Activated CD4-positive, alpha-beta memory T cell treated with anti-CD3 and anti-CD28 coated beads, Interleukin-2, amount 10 ng/mL, durations not matched to agents 7 days and 5 days (primary cell): ENCODE measurements at regions of chr5 and their contacts with region 1.

Region 1: DNA sequence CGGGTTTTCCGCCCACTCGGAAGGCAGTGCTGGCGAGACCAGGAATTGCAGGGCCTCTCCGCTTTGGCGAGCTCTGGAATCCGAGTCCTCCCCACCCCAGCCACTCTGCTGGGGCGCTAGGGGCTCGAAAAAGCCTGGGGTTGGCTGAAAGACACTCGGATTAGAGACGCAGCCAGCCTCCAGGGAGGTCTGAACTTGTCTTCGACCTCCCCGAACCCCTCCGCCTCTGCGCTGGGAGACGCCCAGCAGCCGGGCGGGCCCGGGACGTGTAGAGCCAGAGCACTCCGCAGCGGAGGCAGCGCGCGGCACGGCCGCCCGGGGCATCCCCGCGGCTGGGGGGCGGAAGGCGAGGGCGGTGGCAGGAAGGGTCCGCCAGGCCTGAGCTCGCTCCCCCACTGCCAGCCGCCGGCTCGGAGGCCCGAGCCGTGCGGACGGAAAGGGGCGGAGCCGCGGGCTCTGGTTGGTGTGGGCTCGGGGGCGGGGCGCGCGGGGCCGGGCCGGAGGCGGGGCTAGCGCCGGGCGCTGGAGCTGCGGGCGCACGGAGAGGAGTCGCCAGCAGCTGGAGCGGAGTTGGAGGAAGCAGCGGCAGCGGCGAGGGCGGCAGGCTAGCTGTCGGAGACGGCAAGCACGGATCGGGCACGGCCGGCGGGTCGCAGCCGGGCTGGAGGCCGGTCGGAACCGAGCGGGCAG is at the start of gene PIK3R1:
- DNase-seq: peak; percentile 93
- H3K4me3 Mint-ChIP-seq: peak within 1 kb of the TSS; percentile 85
- H3K27ac Mint-ChIP-seq: peak within 1 kb of the TSS; percentile 88
- H3K4me1 Mint-ChIP-seq: peaks cover 33% of the 10 kb centered on the region
- H3K27me3 Mint-ChIP-seq: no peaks in the 10 kb centered on the region
- total RNA-seq, gene PIK3R1: 83.1 to 86.4 TPM

Region 2: DNA sequence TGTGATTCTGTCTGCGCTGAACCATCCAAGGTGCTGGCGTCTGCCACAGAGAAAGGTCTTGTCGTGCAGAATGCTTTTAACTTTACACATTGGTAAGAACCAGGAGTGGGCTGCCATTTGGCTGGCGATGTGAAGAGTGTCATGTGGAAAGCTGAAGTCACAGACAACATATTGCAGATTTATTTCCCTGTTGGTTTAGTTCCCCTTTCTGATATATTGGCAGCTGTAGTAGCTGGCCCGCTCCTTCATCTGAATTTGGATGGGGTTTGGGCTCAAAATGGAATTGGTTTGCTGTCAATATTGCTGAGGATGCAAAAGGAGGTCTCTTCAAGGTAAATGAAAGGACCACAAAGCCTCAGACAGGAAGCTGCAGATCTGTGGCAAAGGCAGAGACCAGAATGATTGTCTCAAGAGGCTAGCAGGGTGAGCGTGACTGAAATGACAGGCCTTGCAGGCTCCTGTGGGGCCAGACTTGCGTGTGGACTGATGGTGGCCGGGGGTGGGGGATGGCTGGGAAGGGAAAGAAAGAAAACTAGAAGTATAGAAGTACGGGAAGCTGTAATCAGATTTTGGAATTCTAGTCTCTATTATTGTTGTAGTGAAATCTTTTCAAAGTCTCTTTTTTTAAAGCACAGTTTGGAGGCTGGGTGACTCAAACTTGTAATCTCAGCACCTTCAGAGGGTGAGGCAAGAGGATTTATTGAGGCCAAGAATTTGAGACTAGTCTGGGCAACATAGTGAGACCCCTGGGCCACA is 993.7 kb before region 1 on chr5:
- CTCF ChIA-PET with region 1: no interaction called
- POLR2A ChIA-PET with region 1: interaction called, 14 read pairs
- DNase-seq: peak; percentile 82
- H3K4me3 Mint-ChIP-seq: peak overlapping the region; percentile 46
- H3K27ac Mint-ChIP-seq: peak overlapping the region; percentile 95
- H3K4me1 Mint-ChIP-seq: peaks cover 65% of the 10 kb centered on the region
- H3K27me3 Mint-ChIP-seq: no peaks in the 10 kb centered on the region

Region 3: GRCh38 chr5:67935908-67936566 is 279.3 kb before region 1 on chr5:
- CTCF ChIA-PET with region 1: no interaction called
- POLR2A ChIA-PET with region 1: no interaction called
- DNase-seq: no peak
- H3K4me3 Mint-ChIP-seq: no peak overlapping the region
- H3K27ac Mint-ChIP-seq: no peak overlapping the region
- H3K4me1 Mint-ChIP-seq: no peaks in the 10 kb centered on the region
- H3K27me3 Mint-ChIP-seq: no peaks in the 10 kb centered on the region

Region 4: GRCh38 chr5:67949166-67949565 is 266.2 kb before region 1 on chr5:
- CTCF ChIA-PET with region 1: no interaction called
- POLR2A ChIA-PET with region 1: no interaction called
- DNase-seq: no peak
- H3K4me3 Mint-ChIP-seq: no peak overlapping the region
- H3K27ac Mint-ChIP-seq: no peak overlapping the region
- H3K4me1 Mint-ChIP-seq: no peaks in the 10 kb centered on the region
- H3K27me3 Mint-ChIP-seq: no peaks in the 10 kb centered on the region

Region 5: GRCh38 chr5:68252673-68253623 is 37.6 kb after region 1 on chr5:
- CTCF ChIA-PET with region 1: interaction called, 10 read pairs
- POLR2A ChIA-PET with region 1: interaction called, 25 read pairs
- DNase-seq: peak; percentile 36
- H3K4me3 Mint-ChIP-seq: no peak overlapping the region
- H3K27ac Mint-ChIP-seq: no peak overlapping the region
- H3K4me1 Mint-ChIP-seq: peaks cover 77% of the 10 kb centered on the region
- H3K27me3 Mint-ChIP-seq: no peaks in the 10 kb centered on the region

Region 6: DNA sequence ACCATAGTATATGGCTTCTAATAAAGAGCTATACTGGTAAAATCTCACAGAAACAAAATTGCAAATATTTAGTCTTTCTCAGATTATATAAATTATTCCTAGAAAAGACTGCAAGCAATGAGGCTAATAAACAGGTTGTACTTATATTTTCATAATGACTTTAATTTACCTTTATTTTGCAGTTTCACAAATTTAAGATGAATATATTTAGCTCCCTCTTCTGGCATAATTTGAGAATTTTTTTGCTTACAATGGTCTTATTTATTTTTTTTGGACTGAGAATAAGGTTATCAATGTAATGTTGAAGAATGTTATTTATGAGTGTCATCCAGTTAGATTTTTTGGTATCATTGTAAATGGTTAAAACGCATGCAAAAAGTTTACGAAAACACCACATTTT is 56.9 kb after region 1 on chr5:
- CTCF ChIA-PET with region 1: interaction called, 33 read pairs
- POLR2A ChIA-PET with region 1: interaction called, 50 read pairs
- DNase-seq: no peak
- H3K4me3 Mint-ChIP-seq: no peak overlapping the region
- H3K27ac Mint-ChIP-seq: no peak overlapping the region
- H3K4me1 Mint-ChIP-seq: peaks cover 84% of the 10 kb centered on the region
- H3K27me3 Mint-ChIP-seq: no peaks in the 10 kb centered on the region

Region 7: DNA sequence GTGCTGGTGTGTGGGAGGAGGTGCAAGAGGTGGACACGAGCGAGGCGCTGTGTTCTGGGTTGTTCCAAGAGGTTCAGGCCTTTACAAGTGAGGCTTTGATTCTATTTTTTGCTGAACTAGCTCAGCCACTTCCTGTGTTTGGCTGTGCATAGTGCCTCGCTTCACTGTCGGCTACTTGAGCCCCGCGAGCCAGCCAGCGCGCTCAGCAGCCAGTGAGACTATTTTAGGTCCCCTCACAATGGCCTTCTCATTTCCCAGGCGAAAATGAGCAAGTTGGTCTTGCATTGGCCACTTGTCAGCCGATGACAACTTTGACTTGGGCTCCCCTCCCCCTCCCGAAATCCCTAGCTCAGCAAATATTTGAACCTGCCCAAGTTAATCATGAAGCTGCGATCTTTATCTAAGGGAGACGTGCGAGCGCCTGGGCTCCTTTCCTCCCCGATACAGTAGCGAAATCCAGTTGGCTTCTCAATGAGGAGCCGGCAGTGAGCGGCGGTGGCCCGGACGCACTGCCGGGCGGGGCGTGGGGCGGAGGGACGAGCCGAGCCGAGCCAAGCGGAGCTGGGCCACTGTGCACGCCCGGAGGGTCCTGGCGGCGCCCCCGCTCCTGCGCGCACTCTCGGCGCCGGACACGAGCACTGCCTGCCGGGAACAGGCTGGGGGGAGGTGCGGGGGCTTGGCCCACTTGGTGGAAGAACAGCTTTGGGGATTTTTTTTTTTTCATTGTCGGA is 72.8 kb after region 1 on chr5:
- CTCF ChIA-PET with region 1: interaction called, 15 read pairs
- POLR2A ChIA-PET with region 1: interaction called, 10 read pairs
- DNase-seq: peak; percentile 67
- H3K4me3 Mint-ChIP-seq: peak overlapping the region; percentile 84
- H3K27ac Mint-ChIP-seq: peak overlapping the region; percentile 94
- H3K4me1 Mint-ChIP-seq: peaks cover 86% of the 10 kb centered on the region
- H3K27me3 Mint-ChIP-seq: no peaks in the 10 kb centered on the region